AG04450 (cell line): ENCODE measurements at regions of chr9 and their contacts with region 1.

Region 1: DNA sequence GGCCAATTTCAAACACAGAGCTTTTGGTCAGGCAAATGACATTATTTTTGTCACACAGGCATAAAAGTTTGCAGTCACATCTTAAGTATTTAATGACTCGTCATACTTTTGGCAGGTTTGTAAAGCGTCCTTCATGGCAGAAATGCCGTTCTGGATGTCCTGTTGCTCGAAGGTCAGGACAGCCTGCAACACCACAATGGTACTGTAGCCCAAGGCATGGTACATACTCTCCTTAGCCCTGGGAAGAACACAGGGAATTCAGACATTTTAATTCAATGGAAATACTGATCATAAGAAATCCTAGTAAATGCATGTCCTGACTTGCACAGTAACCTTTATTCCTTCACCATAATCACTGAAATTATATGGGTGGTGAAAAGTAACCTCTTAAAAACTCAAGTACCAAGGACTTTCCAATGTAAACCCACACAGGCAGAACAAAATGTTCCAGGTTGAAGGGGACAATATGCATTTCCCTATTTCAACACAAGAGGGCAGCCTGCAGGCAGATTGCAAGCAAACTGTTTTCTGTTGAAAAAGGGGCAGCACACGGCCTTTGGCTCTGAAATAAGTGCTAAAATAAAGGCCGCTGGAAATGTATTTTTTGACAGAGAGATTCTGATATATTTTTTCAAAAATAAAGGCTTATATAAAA is 95.7 kb downstream of the TTC39B start:
- DNase-seq: peak; percentile 59
- H3K4me3 ChIP-seq: no peak overlapping the region
- H3K27ac ChIP-seq: no peak overlapping the region
- H3K27me3 ChIP-seq: no peaks in the 10 kb centered on the region
- CTCF ChIP-seq: peak; percentile 96

Region 2: GRCh38 chr9:14924899-14925235 is 286.4 kb before region 1 on chr9:
- CTCF ChIA-PET with region 1: no interaction called
- POLR2A ChIA-PET with region 1: no interaction called
- DNase-seq: no peak
- H3K4me3 ChIP-seq: no peak overlapping the region
- H3K27ac ChIP-seq: no peak overlapping the region
- H3K27me3 ChIP-seq: no peaks in the 10 kb centered on the region
- CTCF ChIP-seq: no peak

Region 3: GRCh38 chr9:15231788-15232635 is 20.7 kb after region 1 on chr9:
- CTCF ChIA-PET with region 1: interaction called, 12 read pairs
- POLR2A ChIA-PET with region 1: no interaction called
- DNase-seq: no peak
- H3K4me3 ChIP-seq: no peak overlapping the region
- H3K27ac ChIP-seq: no peak overlapping the region
- H3K27me3 ChIP-seq: no peaks in the 10 kb centered on the region
- CTCF ChIP-seq: peak; percentile 45

Region 4: GRCh38 chr9:15317836-15318235 is 106.5 kb after region 1 on chr9:
- CTCF ChIA-PET with region 1: no interaction called
- POLR2A ChIA-PET with region 1: no interaction called
- DNase-seq: no peak
- H3K4me3 ChIP-seq: no peak overlapping the region
- H3K27ac ChIP-seq: no peak overlapping the region
- H3K27me3 ChIP-seq: no peaks in the 10 kb centered on the region
- CTCF ChIP-seq: no peak

Region 5: DNA sequence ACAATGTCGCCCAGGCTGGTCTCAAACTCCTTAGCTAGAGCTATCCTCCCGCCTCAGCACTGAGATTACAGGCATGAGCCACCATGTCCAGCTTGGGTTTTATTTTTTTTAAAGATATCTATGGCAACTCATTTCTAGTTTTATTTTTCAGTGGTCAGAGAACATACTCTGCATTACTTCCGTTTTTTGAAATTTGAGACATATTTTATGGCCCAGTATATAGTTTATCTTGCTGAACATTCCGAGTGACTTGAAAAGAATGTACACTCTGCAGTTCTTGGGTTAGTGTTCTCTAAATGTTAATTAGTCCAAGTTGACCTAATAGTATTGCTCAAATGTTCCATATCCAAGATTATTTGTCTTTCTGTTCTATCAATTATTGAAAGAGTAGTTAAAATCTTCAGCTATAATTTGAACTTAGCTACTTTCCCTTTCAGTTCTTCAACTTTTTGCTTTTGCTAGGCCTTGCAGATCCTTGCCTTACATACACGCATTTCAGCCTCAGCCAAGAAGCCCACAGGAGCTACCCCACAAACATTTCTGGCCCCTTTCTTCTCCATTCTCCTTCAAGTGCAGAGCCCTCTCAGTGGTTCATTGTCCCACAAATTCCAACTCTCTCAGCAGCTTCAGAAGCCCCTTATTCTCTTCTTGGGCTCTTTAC is 189.1 kb after region 1 on chr9:
- CTCF ChIA-PET with region 1: interaction called, 14 read pairs
- POLR2A ChIA-PET with region 1: no interaction called
- DNase-seq: no peak
- H3K4me3 ChIP-seq: no peak overlapping the region
- H3K27ac ChIP-seq: peak overlapping the region; percentile 34
- H3K27me3 ChIP-seq: peaks cover 3% of the 10 kb centered on the region
- CTCF ChIP-seq: no peak

Region 6: GRCh38 chr9:15416880-15417279 is 205.6 kb after region 1 on chr9:
- CTCF ChIA-PET with region 1: interaction called, 15 read pairs
- POLR2A ChIA-PET with region 1: interaction called, 7 read pairs
- DNase-seq: peak; percentile 24
- H3K4me3 ChIP-seq: no peak overlapping the region
- H3K27ac ChIP-seq: no peak overlapping the region
- H3K27me3 ChIP-seq: no peaks in the 10 kb centered on the region
- CTCF ChIP-seq: peak; percentile 55

Region 7: GRCh38 chr9:15422372-15423230 is 211.3 kb after region 1 on chr9 and contains the start of gene SNAPC3:
- CTCF ChIA-PET with region 1: interaction called, 21 read pairs
- POLR2A ChIA-PET with region 1: no interaction called
- DNase-seq: peak; percentile 71
- H3K4me3 ChIP-seq: peak within 1 kb of the TSS; percentile 98
- H3K27ac ChIP-seq: peak within 1 kb of the TSS; percentile 68
- H3K27me3 ChIP-seq: no peaks in the 10 kb centered on the region
- CTCF ChIP-seq: no peak; the same call in 1 of the 2 replicates
- polyA plus RNA-seq, gene SNAPC3: 31.8 and 45.3 TPM in 2 replicates

Region 8: DNA sequence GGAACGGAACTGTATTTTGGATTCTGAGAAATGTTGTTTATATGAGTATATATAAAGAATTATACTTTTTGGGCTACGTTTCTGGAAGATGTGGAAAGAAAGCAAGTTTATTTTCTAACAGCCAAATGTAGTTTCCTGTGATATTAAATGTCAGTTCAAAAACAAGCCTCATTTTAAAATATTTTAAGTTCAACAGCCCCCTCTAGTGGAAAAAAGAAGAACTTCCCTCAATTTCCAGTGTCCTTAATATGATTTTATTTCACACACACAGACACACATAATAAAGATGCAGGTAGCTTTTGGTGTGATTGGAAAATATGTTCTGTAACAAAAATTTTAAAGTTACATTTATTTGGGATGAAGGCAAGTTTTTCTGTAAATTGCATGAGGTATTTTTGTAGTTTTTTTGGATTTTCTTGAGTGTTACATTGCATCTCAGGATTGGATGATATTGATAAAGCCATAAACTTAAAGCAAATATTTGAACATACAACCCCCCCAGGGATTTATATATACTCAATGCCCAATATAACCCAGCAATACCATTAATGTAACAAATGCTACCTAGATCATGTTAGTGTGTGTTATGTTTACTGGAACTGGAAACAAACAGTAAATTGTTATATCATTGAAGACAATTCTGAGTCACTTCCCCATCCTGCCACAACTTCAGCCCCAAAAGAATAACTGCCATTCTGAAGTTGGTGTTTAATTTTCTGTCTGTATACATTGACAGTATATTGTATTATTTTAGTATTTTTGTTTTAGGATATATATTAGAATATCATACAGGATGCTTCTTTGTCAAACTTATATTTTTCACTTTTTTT is 395.6 kb after region 1 on chr9:
- CTCF ChIA-PET with region 1: interaction called, 11 read pairs
- POLR2A ChIA-PET with region 1: no interaction called
- DNase-seq: peak; percentile 3
- H3K4me3 ChIP-seq: no peak overlapping the region
- H3K27ac ChIP-seq: no peak overlapping the region
- H3K27me3 ChIP-seq: no peaks in the 10 kb centered on the region
- CTCF ChIP-seq: peak; percentile 61